Activated CD4-positive, alpha-beta T cell treated with anti-CD3 and anti-CD28 coated beads for 36 hours (primary cell): ENCODE measurements at regions of chr5 and their contacts with region 1.

Region 1: GRCh38 chr5:144203750-144204596 is 33.3 kb downstream of the KCTD16 start:
- DNase-seq: peak; percentile 44
- ATAC-seq: peak; percentile 61
- H3K4me3 Mint-ChIP-seq: no peak overlapping the region
- H3K27ac Mint-ChIP-seq: no peak overlapping the region
- H3K4me1 Mint-ChIP-seq: peaks cover 17% of the 10 kb centered on the region
- H3K27me3 Mint-ChIP-seq: peaks cover 44% of the 10 kb centered on the region

Region 2: DNA sequence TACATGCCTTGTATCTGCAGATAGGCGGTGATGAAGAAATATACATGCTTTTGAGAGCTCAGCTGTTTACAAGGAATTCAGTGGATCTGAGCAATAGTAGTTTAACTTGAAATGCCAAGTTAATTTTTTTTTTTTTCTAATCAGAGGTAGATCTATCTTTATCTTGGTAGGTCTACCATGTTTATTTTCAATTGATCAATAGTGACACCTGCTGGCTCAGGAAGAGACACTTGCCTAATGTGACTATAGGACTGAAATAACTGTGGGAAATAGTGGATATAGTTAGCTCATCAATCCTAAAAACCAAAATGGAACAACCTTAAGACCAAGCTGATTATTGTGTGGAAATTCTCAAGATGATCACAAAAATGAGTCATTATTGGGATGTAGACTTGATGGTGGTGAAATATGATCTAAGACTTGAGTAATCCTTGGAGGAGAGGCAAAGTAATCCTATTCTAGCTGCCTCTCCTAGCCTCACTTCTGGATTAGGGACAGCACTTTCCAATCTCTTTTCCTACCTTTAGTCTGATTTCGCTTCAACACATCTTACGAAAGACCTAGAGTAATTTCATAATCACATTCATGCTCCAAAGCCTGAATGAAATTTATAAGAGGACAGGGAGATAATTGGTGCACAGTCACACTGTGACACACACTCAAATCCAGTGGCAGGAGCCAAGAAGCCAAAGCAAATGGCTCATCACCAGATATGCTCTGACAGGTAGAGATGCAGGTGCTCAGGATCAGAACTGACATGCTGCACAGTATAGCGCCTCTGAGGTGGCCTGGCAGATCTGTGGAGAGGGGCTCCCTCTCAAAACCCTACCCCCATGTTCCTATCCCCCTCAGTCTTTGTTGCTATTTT is 235.7 kb before region 1 on chr5:
- CTCF ChIA-PET with region 1: no interaction called
- POLR2A ChIA-PET with region 1: no interaction called
- intact Hi-C with region 1: no loop called
- DNase-seq: peak; percentile 8
- ATAC-seq: peak; percentile 80
- H3K4me3 Mint-ChIP-seq: no peak overlapping the region
- H3K27ac Mint-ChIP-seq: no peak overlapping the region
- H3K4me1 Mint-ChIP-seq: no peaks in the 10 kb centered on the region
- H3K27me3 Mint-ChIP-seq: no peaks in the 10 kb centered on the region

Region 3: GRCh38 chr5:144390133-144390532 is 186.2 kb after region 1 on chr5:
- CTCF ChIA-PET with region 1: no interaction called
- POLR2A ChIA-PET with region 1: no interaction called
- intact Hi-C with region 1: loop called in 1 of 2 experiments (anchors 10 kb)
- DNase-seq: no peak
- ATAC-seq: no peak
- H3K4me3 Mint-ChIP-seq: no peak overlapping the region
- H3K27ac Mint-ChIP-seq: no peak overlapping the region
- H3K4me1 Mint-ChIP-seq: no peaks in the 10 kb centered on the region
- H3K27me3 Mint-ChIP-seq: no peaks in the 10 kb centered on the region

Region 4: DNA sequence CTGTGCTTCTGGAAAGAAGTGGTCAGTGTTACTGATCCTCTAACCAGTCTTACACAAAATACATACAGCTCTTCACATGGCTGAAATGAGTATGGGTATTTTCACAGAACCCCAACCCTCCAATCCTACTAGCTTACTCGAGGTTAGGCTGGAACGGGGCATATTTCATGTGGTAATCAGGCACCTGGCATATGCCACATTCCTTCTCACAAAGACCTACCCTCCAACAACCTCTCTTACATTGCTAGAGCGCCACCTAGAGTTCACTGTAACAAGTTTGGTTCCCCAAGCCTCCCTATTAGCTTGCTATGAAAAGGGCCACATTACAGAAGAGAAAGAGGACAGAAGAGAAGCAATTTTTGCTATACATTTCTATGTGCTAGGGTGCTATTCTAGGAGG is 1033.9 kb after region 1 on chr5:
- CTCF ChIA-PET with region 1: interaction called, 5 read pairs
- POLR2A ChIA-PET with region 1: no interaction called
- intact Hi-C with region 1: loop called in 1 of 2 experiments (anchors 2 kb)
- DNase-seq: peak; percentile 24
- ATAC-seq: no peak
- H3K4me3 Mint-ChIP-seq: no peak overlapping the region
- H3K27ac Mint-ChIP-seq: no peak overlapping the region
- H3K4me1 Mint-ChIP-seq: no peaks in the 10 kb centered on the region
- H3K27me3 Mint-ChIP-seq: no peaks in the 10 kb centered on the region

Region 5: DNA sequence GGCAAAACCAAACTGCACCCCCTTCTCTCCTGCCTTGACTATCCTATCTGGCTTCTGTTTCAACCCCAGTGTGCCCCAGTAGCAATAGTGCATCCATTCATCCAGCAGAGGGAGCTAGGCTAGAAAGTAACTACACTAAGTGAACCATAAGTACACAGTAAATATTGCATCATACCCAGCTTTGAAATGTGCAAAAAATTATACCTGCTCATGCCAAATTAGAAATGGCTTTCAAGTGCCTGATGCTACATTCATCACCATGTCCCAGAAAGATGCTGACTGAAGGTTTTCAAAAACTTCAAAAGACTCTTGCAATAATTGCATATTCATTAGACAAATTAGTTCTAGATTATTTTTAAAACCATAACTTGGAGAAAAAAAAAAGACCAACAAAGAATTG is 1477.7 kb after region 1 on chr5:
- CTCF ChIA-PET with region 1: no interaction called
- POLR2A ChIA-PET with region 1: no interaction called
- intact Hi-C with region 1: loop called in 1 of 2 experiments (anchors 5 kb)
- DNase-seq: peak; percentile 60
- ATAC-seq: peak; percentile 94
- H3K4me3 Mint-ChIP-seq: no peak overlapping the region
- H3K27ac Mint-ChIP-seq: no peak overlapping the region
- H3K4me1 Mint-ChIP-seq: peaks cover 3% of the 10 kb centered on the region
- H3K27me3 Mint-ChIP-seq: no peaks in the 10 kb centered on the region